ENCODE measurements at regions of chr9 and their contacts with region 1.

Region 1: DNA sequence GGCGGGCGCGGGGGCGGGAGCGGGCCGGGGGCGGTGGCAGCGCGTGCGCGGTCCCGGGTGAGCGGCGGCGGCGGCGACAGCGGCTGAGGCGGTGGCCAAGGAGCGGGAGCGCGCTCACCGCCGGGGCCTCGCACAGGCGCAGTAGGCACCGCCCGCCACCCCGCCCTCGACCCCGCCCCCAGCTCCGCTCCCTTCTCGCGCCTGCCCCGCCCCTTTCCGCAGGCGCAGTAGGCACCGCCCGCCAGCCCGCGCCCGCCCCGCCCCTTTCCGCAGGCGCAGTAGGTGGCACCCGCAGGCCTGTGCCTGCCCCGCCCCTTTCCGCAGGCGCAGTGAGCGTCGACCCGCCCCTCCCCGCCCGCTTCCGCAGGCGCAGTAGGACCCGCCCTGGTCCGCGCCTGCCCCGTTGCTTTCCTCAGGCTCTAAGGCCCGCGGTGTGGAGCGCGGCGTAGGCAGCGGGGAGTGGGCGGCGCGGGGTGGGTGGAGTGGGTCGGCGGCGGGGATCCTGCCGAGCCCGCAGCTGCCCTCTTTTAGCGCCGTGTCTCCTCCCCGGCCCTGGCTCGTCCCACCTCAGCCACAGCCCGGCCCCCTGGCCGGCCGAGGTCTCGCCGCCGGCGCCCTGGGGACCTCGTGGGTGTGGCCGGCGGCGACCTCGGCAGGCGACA is at the start of gene CAMSAP1:
- DNase-seq: peak; percentile 97
- H3K4me3 Mint-ChIP-seq: peak within 1 kb of the TSS; percentile 82
- H3K27ac Mint-ChIP-seq: peak within 1 kb of the TSS; percentile 86
- H3K4me1 Mint-ChIP-seq: peaks cover 62% of the 10 kb centered on the region
- H3K27me3 Mint-ChIP-seq: no peaks in the 10 kb centered on the region
- total RNA-seq, gene CAMSAP1: 43.2 to 46.0 TPM

Region 2: DNA sequence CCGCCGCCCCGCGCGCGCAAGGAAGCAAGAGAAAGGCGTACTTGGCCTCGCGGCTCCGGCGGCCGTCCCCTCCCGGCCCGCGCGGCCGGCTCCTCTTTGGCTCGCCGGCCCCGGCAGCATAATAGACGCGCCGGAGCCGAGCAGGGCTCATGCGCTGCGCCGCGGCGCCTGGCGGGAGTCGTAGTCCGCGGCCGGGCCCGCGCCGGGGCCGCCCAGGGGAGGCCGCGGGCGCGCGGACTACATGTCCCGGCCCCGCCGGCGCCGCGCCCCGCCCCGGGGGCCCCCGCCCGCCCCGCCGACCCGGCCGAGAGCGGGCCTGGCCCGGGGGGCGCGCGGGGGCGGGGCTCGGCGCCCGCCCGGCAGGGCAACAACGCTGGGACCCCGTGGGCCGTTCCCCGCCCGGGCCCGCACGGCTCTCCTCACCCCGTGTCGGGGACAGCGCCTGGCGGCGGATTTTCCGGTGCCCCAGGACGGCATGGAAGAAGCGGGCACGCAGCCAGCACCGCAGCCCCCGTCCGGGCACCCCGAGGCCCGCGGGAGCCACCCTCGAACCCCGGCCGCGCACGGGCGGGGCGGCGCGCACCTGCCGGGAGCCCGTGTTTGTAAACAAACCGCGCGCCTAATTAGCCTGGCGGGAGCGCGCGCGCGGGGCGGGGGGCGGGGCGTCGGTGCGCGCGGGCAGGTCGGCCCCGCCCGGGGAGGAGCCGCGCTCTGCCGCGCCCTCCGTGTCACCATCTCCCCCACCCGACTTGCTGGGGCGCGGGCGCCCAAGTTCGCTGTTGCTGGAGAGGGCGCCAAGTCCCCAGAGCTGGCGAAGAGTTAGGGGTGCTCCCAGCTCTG is 1839.4 kb before region 1 on chr9 and contains the start of gene BRD3:
- CTCF ChIA-PET with region 1: no interaction called
- POLR2A ChIA-PET with region 1: no interaction called
- intact Hi-C with region 1: loop called (anchors 5 kb)
- DNase-seq: peak; percentile 85
- H3K4me3 Mint-ChIP-seq: peak within 1 kb of the TSS; percentile 87
- H3K27ac Mint-ChIP-seq: peak within 1 kb of the TSS; percentile 80
- H3K4me1 Mint-ChIP-seq: peaks cover 24% of the 10 kb centered on the region
- H3K27me3 Mint-ChIP-seq: peaks cover 13% of the 10 kb centered on the region
- total RNA-seq, gene BRD3: 29.2 to 30.0 TPM

Region 3: DNA sequence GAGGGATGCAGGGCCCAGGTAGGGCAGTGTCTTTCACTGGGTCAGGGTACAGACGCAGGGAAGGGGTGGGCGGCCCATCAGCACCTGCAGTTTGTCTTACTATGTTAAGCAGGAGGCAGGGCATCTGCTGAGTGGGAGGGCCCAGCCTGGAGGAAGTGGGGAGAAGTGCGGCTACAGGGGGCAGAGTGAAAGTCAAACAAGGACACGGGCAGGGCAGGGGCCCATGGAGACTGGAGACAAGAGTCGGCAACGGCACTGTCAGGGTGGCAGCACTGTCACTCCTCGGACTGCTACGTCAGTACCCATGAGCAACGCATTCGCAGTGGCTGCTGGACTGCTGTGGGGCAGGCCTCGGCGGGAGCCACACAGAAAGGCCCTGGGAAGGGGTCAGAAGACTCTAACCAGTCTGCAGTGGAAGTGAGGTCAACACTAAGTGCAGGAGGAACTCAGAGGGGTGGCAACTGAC is 19.9 kb before region 1 on chr9:
- CTCF ChIA-PET with region 1: no interaction called
- POLR2A ChIA-PET with region 1: no interaction called
- intact Hi-C with region 1: loop called (anchors 2 kb)
- DNase-seq: peak; percentile 81
- H3K4me3 Mint-ChIP-seq: peak overlapping the region; percentile 25
- H3K27ac Mint-ChIP-seq: peak overlapping the region; percentile 80
- H3K4me1 Mint-ChIP-seq: peaks cover 87% of the 10 kb centered on the region
- H3K27me3 Mint-ChIP-seq: no peaks in the 10 kb centered on the region

Region 4: DNA sequence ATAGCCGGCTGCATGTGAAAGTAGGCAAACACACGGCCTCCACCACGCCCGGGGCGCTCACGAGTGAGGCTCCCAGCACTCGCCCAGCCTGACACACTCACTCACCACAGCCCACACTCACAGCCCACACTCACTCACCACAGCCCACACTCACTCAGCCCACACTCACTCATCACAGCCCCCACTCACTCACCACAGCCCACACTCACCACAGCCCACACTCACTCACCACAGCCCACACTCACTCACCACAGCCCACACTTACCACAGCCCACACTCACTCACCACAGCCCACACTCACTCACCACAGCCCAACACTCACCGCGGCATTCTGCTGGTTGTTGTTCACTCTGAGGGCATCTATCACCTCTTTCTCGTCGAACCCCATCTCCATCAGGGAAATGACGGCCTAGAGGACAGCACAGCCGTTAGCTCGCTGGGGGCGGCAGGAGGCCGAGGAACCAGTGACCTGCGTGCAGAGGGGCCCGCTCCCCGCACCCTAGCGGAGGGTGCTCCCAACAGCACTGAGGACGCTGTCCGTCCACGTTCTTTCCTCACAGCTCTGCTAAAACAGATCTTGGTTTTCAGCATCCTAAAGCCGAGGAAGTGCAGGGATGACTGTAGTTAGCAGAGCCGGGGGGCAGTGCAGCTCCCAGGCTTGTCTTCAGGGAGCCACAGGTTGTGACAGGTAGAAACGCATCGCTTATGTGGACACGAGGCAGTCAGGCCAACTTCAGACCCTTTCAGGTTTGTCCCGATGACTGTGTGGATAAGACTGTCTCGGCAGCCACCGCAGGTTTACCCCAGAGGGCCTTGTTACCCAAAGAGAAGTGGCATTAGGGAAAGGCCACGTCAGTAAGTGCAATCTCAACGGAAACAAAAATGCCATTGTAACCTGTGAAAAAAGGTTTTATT is 32.0 kb after region 1 on chr9:
- CTCF ChIA-PET with region 1: no interaction called
- POLR2A ChIA-PET with region 1: no interaction called
- intact Hi-C with region 1: loop called (anchors 1 kb)
- DNase-seq: peak; percentile 72
- H3K4me3 Mint-ChIP-seq: peak overlapping the region; percentile 73
- H3K27ac Mint-ChIP-seq: peak overlapping the region; percentile 89
- H3K4me1 Mint-ChIP-seq: peaks cover 13% of the 10 kb centered on the region
- H3K27me3 Mint-ChIP-seq: peaks cover 3% of the 10 kb centered on the region

Region 5: GRCh38 chr9:136109351-136110081 is 202.0 kb after region 1 on chr9:
- CTCF ChIA-PET with region 1: no interaction called
- POLR2A ChIA-PET with region 1: no interaction called
- intact Hi-C with region 1: loop called (anchors 1 kb)
- DNase-seq: peak; percentile 97
- H3K4me3 Mint-ChIP-seq: peak overlapping the region; percentile 80
- H3K27ac Mint-ChIP-seq: peak overlapping the region; percentile 96
- H3K4me1 Mint-ChIP-seq: peaks cover 75% of the 10 kb centered on the region
- H3K27me3 Mint-ChIP-seq: no peaks in the 10 kb centered on the region

Region 6: DNA sequence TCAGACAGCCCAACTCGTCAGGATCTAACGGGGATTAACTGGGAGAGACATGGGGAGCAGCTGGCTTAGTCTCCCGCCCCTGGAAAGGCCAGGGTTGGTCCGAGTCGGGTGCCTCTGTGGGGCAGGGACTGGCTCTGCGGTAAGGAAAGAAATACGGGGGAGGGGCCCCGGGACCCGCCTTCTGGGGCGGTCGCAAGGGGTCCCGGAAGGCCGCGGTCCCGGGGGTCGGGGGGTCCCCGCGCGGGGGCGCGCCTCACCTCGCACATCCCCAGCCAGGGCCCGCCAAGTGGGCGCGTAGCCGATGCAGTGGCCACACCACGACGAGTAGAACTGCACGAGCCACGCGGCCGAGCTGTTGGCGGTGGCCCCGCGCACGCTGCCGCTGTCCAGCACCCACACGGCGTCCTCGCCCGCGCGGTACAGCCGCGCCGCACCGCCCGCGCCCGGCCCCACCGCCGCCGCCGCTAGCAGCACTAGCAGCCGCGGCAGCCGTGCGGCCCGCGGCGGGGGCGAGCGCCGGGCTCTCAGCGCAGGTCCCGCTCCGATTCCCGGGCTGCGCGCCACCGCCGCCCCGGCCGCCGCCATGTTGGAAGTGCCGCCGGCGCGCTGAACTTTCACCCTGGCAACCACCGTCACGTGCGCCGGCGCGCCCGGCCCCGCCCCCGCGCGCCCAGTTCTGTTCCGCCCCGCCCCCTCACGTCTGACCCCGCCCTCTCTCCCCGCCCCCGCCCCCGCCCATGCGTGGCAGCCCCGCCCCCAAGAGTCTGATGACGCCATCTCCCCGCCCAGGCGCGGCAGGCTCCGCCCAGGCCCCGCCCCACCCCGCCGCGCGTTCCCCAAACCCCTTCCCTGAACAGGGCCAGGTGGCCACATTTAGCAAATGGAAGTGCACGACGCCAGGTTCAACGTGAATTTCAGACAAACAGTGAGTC is 337.9 kb after region 1 on chr9 and contains the start of gene QSOX2:
- CTCF ChIA-PET with region 1: no interaction called
- POLR2A ChIA-PET with region 1: no interaction called
- intact Hi-C with region 1: loop called (anchors 1 kb)
- DNase-seq: peak; percentile 89
- H3K4me3 Mint-ChIP-seq: peak within 1 kb of the TSS; percentile 89
- H3K27ac Mint-ChIP-seq: peak within 1 kb of the TSS; percentile 92
- H3K4me1 Mint-ChIP-seq: peaks cover 35% of the 10 kb centered on the region
- H3K27me3 Mint-ChIP-seq: no peaks in the 10 kb centered on the region
- total RNA-seq, gene QSOX2: 19.0 to 19.4 TPM

Region 7: DNA sequence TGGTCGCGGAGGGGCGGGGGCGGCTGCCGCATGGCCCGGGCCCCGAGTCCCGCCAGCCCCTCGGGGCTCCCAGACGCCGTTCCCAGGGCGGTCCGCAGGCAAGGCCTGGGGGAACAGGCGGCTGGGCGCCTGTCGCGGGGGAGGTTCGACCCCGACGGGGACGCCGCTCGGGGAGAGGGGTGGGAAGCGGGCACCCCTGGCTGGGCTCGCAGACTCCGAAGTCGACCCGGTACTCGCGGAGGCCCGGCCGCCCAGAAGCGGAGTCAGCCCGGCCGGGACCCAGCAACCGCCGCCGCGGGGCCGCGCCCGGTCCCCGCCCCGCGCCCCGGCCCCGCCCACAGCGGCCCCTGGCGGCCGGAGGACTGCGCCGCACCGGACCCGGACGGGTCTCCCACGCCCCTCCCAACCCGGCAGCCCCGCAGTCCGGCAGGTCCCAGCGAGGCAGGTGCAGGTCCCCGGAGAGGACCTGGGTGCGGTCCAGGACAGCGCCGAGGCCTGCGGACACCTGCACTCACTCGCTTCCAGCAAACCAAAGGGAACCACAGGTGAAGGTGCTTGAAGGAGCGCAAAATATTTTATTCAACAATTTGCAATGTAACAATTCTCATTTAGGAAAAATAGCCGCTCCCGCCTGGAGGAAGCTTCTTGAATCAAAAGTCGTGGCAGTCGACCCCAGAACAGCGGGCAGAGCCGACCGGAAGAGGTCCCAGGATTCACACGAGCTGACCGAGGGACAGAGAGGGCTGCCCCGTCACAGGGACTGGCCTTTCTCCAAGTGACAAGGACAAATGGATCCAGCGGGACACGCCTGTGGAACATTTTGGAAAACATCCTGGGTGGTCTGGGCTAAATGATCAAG is 532.2 kb after region 1 on chr9 and contains the start of gene INPP5E:
- CTCF ChIA-PET with region 1: no interaction called
- POLR2A ChIA-PET with region 1: no interaction called
- intact Hi-C with region 1: no loop called
- DNase-seq: peak; percentile 84
- H3K4me3 Mint-ChIP-seq: peak within 1 kb of the TSS; percentile 88
- H3K27ac Mint-ChIP-seq: peak within 1 kb of the TSS; percentile 23
- H3K4me1 Mint-ChIP-seq: peaks cover 23% of the 10 kb centered on the region
- H3K27me3 Mint-ChIP-seq: no peaks in the 10 kb centered on the region
- total RNA-seq, gene INPP5E: 18.8 to 21.3 TPM